ENCODE measurements at regions of chr22 and their contacts with region 1.

Region 1: DNA sequence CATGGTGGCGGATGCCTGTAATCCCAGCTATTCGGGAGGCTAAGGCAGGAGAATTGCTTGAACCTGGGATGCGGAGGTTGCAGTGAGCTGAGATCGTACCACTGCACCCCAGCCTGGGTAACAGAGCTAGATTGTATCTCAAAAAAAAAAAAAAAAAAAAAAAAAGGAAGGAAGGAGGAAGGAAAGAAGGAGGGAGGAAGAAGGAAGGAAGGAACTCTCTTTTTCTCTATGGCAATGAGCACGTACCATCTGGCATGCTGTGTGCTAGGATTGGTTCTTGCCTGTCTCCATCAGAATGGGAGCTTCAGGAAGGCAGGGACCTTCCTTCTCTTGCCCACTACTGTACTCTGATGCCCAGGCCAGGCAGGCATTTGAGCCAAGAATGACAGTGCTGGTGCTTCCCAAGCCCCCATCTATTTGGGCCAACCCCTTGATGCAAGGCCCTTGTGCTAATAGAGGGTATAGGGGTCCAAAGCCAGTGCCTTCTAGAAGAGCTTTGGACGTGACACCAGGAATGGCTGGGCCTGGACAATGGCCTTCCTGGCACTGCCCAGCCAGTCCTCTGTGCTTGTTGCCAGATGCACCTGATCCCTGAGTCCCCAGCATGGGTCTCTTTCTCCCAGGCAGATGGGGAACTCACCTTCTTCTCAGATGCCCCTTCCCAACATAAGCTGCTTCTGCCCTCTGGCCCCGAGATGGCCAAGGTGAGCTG is 10.6 kb upstream of the DGCR8 start:
- DNase-seq: no peak
- H3K4me3 Mint-ChIP-seq: no peak overlapping the region
- H3K27ac Mint-ChIP-seq: no peak overlapping the region
- H3K4me1 Mint-ChIP-seq: no peaks in the 10 kb centered on the region
- H3K27me3 Mint-ChIP-seq: no peaks in the 10 kb centered on the region

Region 2: GRCh38 chr22:20037419-20037818 is 32.1 kb before region 1 on chr22:
- CTCF ChIA-PET with region 1: no interaction called
- POLR2A ChIA-PET with region 1: no interaction called
- intact Hi-C with region 1: loop called (anchors 5 kb)
- DNase-seq: peak; percentile 42
- H3K4me3 Mint-ChIP-seq: no peak overlapping the region
- H3K27ac Mint-ChIP-seq: peak overlapping the region; percentile 75
- H3K4me1 Mint-ChIP-seq: peaks cover 23% of the 10 kb centered on the region
- H3K27me3 Mint-ChIP-seq: no peaks in the 10 kb centered on the region

Measured in activated CD4-positive, alpha-beta memory T cell treated with anti-CD3 and anti-CD28 coated beads for 36 hours (primary cell).